Activated CD8-positive, alpha-beta T cell treated with anti-CD3 and anti-CD28 coated beads, Interleukin-2, amount 10 ng/mL, durations not matched to agents 7 days and 5 days (primary cell): ENCODE measurements at regions of chr3 and their contacts with region 1.

Region 1: DNA sequence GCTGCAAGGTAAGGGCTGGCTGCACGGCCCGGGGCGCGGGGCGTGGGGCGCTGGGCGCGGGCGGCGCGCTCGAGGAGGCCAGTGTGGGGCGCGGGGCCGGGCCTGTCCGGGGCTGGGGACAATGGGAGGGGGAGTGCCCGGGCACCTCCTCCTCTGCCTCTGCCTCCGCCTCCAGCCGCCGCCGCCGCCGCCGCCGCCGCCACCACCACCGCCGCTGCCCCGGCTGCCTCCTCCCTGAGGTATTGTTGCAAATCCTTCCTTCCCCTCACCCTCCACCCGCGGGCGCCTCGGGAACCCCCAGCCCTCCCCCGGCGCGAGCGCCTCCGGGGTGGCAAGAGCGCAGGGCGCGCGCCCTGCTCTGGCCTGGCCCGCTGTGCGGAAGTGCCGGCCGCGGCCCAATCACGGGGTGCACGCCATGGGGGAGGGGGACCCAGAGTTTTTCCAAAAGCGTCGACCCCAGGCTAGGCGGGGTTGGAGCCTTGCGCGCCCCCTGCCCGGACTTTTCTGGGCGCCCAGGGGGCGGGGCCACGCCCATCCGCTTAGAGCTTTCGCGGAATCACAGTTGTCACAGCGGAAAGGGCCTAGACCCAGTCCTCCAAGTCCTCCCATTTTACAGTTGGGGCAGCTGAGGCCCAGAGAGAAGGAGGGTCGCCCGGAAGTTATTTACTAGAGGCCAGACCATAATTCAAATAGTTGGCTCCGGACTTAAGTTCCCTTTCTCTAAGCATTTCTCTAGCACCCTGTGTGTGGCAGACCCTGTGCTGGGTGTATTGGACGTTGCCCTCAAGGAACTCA is at the start of gene LPP:
- DNase-seq: peak; percentile 92
- ATAC-seq: peak; percentile 84
- H3K4me3 Mint-ChIP-seq: peak within 1 kb of the TSS; percentile 90
- H3K27ac Mint-ChIP-seq: peak within 1 kb of the TSS; percentile 88
- H3K4me1 Mint-ChIP-seq: peaks cover 60% of the 10 kb centered on the region
- H3K27me3 Mint-ChIP-seq: no peaks in the 10 kb centered on the region
- total RNA-seq, gene LPP: 51.3 to 58.9 TPM

Region 2: GRCh38 chr3:187802928-187803259 is 351.3 kb before region 1 on chr3:
- CTCF ChIA-PET with region 1: no interaction called
- POLR2A ChIA-PET with region 1: interaction called, 12 read pairs
- DNase-seq: peak; percentile 84
- ATAC-seq: peak; percentile 55
- H3K4me3 Mint-ChIP-seq: peak overlapping the region; percentile 39
- H3K27ac Mint-ChIP-seq: peak overlapping the region; percentile 93
- H3K4me1 Mint-ChIP-seq: peaks cover 83% of the 10 kb centered on the region
- H3K27me3 Mint-ChIP-seq: no peaks in the 10 kb centered on the region

Region 3: DNA sequence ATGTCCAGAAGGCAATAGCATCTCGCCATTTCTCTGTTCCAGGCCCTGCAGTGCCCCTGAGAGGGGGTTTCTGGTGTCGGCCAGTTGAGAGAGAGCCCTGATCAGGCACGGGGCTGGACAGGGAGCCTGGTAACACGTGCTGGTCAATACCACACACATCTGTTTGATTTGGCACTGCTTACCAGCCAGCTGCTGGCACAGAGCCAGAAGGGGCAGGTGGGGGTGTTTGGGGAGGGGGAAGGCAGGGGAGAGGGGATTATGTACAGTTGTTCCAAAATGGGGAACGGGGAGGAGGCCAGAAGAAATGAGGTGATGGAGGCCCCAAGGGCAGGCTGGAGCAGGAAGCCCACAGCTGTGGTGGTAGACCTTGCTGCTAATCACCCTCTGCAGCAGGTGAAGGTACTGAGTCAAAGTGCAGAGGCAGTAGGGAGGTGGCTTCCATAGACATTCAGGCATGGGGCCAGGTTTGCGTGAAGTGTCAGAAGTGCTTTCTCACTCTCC is 153.8 kb before region 1 on chr3:
- CTCF ChIA-PET with region 1: interaction called, 5 read pairs
- POLR2A ChIA-PET with region 1: interaction called, 13 read pairs
- DNase-seq: peak; percentile 43
- ATAC-seq: peak; percentile 54
- H3K4me3 Mint-ChIP-seq: peak overlapping the region; percentile 76
- H3K27ac Mint-ChIP-seq: peak overlapping the region; percentile 94
- H3K4me1 Mint-ChIP-seq: peaks cover 88% of the 10 kb centered on the region
- H3K27me3 Mint-ChIP-seq: no peaks in the 10 kb centered on the region

Region 4: DNA sequence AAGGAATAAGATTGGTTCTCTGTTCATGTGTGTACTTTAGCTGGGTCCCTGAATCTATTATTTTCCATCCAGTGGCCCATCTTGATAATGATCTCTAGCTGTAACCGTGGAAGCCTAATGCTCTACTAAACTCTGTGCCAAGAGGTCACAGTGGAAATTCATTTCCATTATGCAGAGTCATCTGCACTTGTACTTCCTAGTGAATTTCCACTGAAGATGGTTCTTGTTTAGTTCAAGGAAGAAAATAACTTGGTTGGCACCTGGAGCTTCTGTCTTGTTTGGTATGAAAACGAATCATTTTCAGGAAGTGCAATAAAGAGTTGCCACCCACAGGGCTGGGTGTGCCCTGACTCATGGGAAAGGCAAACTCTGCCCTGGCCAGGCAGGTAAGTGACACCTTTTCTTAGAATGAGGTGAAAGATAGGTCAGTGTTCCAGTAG is 10.1 kb after region 1 on chr3:
- CTCF ChIA-PET with region 1: interaction called, 5 read pairs
- POLR2A ChIA-PET with region 1: interaction called, 20 read pairs
- DNase-seq: no peak
- ATAC-seq: peak; percentile 48
- H3K4me3 Mint-ChIP-seq: no peak overlapping the region
- H3K27ac Mint-ChIP-seq: peak overlapping the region; percentile 58
- H3K4me1 Mint-ChIP-seq: peaks cover 44% of the 10 kb centered on the region
- H3K27me3 Mint-ChIP-seq: no peaks in the 10 kb centered on the region